ENCODE measurements at regions of chr5 and their contacts with region 1.

Region 1: DNA sequence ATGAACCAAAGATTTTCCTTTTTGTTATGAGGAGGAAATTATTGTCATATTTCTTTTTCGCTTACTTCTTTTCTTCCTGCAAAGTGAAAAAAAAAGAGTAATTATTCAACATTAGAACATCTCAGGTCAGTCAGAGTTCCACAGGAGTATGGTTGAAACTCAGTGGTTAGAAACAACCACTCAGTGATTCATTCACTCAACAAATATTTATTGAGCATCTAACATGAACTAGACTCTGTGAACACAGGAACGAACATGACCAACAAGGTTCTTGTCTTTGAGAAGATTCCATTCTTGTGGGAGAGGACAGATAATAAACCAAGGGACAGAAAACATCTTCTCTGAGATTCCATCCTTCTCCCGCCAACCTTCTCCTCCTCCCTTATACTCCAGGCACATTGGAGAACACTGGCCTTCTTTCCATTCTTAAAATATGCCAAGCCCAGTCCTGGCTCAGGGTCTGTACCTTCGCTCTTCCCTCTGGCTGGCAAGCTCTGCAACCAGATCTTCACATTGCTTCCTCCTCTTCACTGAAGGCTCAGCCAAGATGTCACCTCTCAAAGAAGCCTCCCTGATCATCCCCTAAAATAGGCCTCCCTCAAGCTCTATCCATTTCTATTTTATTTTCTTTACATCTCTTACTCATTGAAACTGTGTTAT is 6.8 kb upstream of the GRAMD2B start:
- DNase-seq: no peak
- ATAC-seq: no peak
- H3K4me3 ChIP-seq: no peak overlapping the region
- H3K4me3 Mint-ChIP-seq: no peak overlapping the region
- H3K27ac ChIP-seq: no peak overlapping the region
- H3K27ac Mint-ChIP-seq: no peak overlapping the region
- H3K4me1 ChIP-seq: no peaks in the 10 kb centered on the region
- H3K4me1 Mint-ChIP-seq: no peaks in the 10 kb centered on the region
- H3K27me3 ChIP-seq: no peaks in the 10 kb centered on the region
- H3K27me3 Mint-ChIP-seq: peaks cover 19% of the 10 kb centered on the region
- CTCF ChIP-seq: no peak

Region 2: GRCh38 chr5:126403876-126404275 is 12.5 kb before region 1 on chr5:
- CTCF ChIA-PET with region 1: no interaction called
- POLR2A ChIA-PET with region 1: no interaction called
- intact Hi-C with region 1: no loop called
- DNase-seq: no peak
- ATAC-seq: no peak
- H3K4me3 ChIP-seq: no peak overlapping the region
- H3K4me3 Mint-ChIP-seq: no peak overlapping the region
- H3K27ac ChIP-seq: no peak overlapping the region
- H3K27ac Mint-ChIP-seq: no peak overlapping the region
- H3K4me1 ChIP-seq: no peaks in the 10 kb centered on the region
- H3K4me1 Mint-ChIP-seq: no peaks in the 10 kb centered on the region
- H3K27me3 ChIP-seq: no peaks in the 10 kb centered on the region
- H3K27me3 Mint-ChIP-seq: no peaks in the 10 kb centered on the region
- CTCF ChIP-seq: no peak

Region 3: DNA sequence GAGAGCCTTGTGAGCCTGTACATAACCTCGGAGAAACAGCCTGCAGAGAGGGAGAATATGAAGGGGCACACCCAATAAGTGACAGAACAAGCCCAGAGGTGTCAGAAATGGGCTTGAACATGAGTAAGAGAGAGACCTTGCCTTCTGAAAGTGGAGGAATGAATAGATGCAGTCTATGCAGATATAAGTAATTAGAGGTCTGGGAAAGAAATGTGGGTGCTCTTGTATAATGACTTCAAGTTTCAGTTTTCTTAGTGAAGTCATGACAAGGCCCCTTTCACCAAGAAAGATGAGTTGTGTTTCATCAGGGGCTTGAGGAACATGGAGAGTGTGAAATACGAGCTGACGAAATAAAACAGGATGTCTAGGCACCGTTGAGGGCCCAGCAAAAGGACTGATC is 21.9 kb after region 1 on chr5:
- CTCF ChIA-PET with region 1: no interaction called
- POLR2A ChIA-PET with region 1: no interaction called
- intact Hi-C with region 1: loop called in 1 of 2 experiments (anchors 2 kb)
- DNase-seq: peak in 1 of 14 experiments; percentile 28
- ATAC-seq: no peak
- H3K4me3 ChIP-seq: no peak overlapping the region
- H3K4me3 Mint-ChIP-seq: no peak overlapping the region
- H3K27ac ChIP-seq: no peak overlapping the region
- H3K27ac Mint-ChIP-seq: no peak overlapping the region
- H3K4me1 ChIP-seq: peaks cover under 1% of the 10 kb centered on the region
- H3K4me1 Mint-ChIP-seq: peaks cover 11% of the 10 kb centered on the region
- H3K27me3 ChIP-seq: no peaks in the 10 kb centered on the region
- H3K27me3 Mint-ChIP-seq: no peaks in the 10 kb centered on the region
- CTCF ChIP-seq: no peak

Region 4: DNA sequence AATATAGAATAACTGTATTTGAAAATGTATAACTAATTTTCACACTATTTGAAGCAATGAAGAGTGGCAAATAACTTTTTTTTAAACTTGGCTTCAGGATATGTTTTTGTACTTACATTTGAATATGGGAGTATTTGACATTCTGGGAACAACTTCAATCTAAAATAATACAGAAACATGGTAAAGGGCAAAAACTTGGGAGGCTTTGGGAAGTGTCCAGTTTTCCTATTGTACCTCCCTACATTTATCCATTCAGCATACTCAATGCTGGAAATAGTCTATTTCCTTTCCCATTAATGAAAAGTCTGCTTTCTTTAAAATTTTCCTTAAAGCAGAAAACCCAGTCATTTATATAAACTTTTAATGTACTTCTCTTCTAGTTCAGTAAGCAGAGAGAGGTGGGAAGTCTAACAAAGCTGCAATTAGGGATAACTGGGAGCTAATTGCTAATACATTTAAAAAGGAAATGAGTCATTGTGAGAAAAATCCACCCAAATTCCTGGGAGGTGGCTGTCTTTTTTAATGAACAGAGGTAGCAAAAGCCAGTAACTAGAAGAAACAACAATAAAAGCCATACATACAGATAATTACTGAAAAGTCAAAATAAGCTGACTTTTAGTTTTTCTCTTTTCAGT is 1992.9 kb after region 1 on chr5:
- CTCF ChIA-PET with region 1: no interaction called
- POLR2A ChIA-PET with region 1: no interaction called
- intact Hi-C with region 1: no loop called
- DNase-seq: no peak
- ATAC-seq: no peak
- H3K4me3 ChIP-seq: no peak overlapping the region
- H3K4me3 Mint-ChIP-seq: no peak overlapping the region
- H3K27ac ChIP-seq: no peak overlapping the region
- H3K27ac Mint-ChIP-seq: no peak overlapping the region
- H3K4me1 ChIP-seq: no peaks in the 10 kb centered on the region
- H3K4me1 Mint-ChIP-seq: no peaks in the 10 kb centered on the region
- H3K27me3 ChIP-seq: no peaks in the 10 kb centered on the region
- H3K27me3 Mint-ChIP-seq: no peaks in the 10 kb centered on the region
- CTCF ChIP-seq: no peak